Naive thymus-derived CD4-positive, alpha-beta T cell (primary cell): ENCODE measurements at regions of chr5 and their contacts with region 1.

Region 1: DNA sequence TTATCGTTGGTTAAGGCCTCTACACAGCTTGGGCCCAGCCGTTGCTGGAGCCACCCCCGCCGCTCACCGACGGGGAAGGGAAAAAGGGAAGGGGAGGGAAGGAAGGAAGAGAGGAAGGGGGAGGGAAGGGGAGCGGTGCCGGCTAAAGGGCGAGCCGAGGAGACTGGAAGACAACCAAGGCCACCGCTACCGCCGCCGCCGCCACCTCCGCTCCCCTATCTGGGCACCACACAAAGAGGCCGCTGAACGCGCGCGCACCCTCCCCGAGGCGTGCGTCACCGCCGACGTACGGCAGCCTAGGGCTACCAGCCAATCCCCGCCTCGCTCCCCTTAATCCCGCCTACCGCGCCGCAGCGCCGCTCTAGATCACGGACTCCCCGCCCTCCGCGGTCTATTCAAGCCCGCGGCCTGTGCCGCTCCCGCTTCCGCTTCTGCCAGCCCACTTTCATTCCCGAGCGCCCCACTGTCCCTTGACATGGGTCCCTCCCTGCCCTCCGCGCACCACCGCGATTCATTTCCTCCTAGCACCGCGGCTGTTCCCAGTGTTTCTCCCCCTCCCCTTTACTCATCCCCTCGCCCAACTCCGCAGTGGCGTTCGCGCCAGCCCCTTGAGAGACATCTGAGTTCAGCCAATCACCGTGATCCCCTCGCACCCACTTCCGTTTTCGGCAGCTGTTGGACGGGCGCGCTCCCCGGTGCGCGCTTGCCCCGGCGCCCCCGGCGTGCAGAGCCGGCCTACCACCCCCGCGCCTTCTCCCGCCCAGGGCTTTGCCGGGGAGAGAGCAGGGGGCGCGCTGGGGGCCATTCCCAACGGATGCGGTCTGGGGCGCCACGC is at the start of gene HNRNPA0:
- DNase-seq: peak; percentile 94 to 99 (median 98)
- ATAC-seq: peak; percentile 90
- H3K4me3 ChIP-seq: peak within 1 kb of the TSS; percentile 98
- H3K4me3 Mint-ChIP-seq: peak within 1 kb of the TSS; percentile 85 to 100 (median 98)
- H3K27ac ChIP-seq: peak within 1 kb of the TSS; percentile 98
- H3K27ac Mint-ChIP-seq: peak within 1 kb of the TSS; percentile 99 to 100 (median 100)
- H3K4me1 ChIP-seq: peaks cover 17 to 20% of the 10 kb centered on the region in 2 donors
- H3K4me1 Mint-ChIP-seq: peaks cover 21 to 43% (median 31%) of the 10 kb centered on the region in 7 donors
- H3K27me3 ChIP-seq: no peaks in the 10 kb centered on the region
- H3K27me3 Mint-ChIP-seq: peaks cover 0 to 2% (median 0%) of the 10 kb centered on the region in 5 donors
- total RNA-seq, gene HNRNPA0: 30.0 to 40.2 (median 30.7) TPM

Region 2: DNA sequence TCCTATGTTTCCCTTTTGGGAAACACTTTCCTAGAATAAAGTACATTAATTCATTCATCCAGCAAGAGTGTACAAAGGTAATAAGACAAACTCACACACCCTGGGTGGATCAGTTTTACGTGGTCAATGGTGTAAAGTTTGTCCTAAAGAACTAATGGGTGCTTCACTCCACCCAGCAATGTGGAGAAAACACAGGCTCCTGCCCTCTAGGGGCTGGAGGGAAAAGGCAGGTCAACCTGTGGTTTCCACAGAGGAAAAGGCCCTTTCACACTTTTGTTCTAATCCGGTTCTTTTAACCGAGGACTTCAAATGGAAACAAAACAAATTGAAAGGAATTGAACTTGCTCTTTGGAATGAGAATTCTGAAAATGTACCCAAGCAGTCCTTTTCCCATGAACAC is 174.3 kb before region 1 on chr5:
- CTCF ChIA-PET with region 1: no interaction called
- POLR2A ChIA-PET with region 1: no interaction called
- intact Hi-C with region 1: no loop called
- DNase-seq: no peak
- ATAC-seq: no peak
- H3K4me3 ChIP-seq: no peak overlapping the region
- H3K4me3 Mint-ChIP-seq: no peak overlapping the region
- H3K27ac ChIP-seq: no peak overlapping the region
- H3K27ac Mint-ChIP-seq: no peak overlapping the region
- H3K4me1 ChIP-seq: no peaks in the 10 kb centered on the region
- H3K4me1 Mint-ChIP-seq: peaks cover 0 to 5% (median 0%) of the 10 kb centered on the region in 7 donors
- H3K27me3 ChIP-seq: no peaks in the 10 kb centered on the region
- H3K27me3 Mint-ChIP-seq: peaks cover 5 to 22% (median 12%) of the 10 kb centered on the region in 5 donors

Region 3: GRCh38 chr5:137665678-137666460 is 88.5 kb before region 1 on chr5:
- CTCF ChIA-PET with region 1: interaction called, 328 read pairs
- POLR2A ChIA-PET with region 1: interaction called, 19 read pairs
- intact Hi-C with region 1: no loop called
- DNase-seq: peak in 8 of 9 donors; percentile 23 to 66 (median 53)
- ATAC-seq: peak; percentile 99
- H3K4me3 ChIP-seq: no peak overlapping the region
- H3K4me3 Mint-ChIP-seq: peak overlapping the region in 6 of 10 donors; percentile 18 to 56 (median 46)
- H3K27ac ChIP-seq: peak overlapping the region; percentile 30
- H3K27ac Mint-ChIP-seq: peak overlapping the region; percentile 43 to 91 (median 70)
- H3K4me1 ChIP-seq: peaks cover 7 to 9% of the 10 kb centered on the region in 2 donors
- H3K4me1 Mint-ChIP-seq: peaks cover 8 to 35% (median 27%) of the 10 kb centered on the region in 7 donors
- H3K27me3 ChIP-seq: no peaks in the 10 kb centered on the region
- H3K27me3 Mint-ChIP-seq: no peaks in the 10 kb centered on the region

Region 4: GRCh38 chr5:137708796-137709559 is 45.4 kb before region 1 on chr5:
- CTCF ChIA-PET with region 1: no interaction called
- POLR2A ChIA-PET with region 1: no interaction called
- intact Hi-C with region 1: no loop called
- DNase-seq: no peak
- ATAC-seq: no peak
- H3K4me3 ChIP-seq: no peak overlapping the region
- H3K4me3 Mint-ChIP-seq: peak overlapping the region in 1 of 10 donors; percentile 12
- H3K27ac ChIP-seq: no peak overlapping the region
- H3K27ac Mint-ChIP-seq: peak overlapping the region in 2 of 9 donors; percentile 34 to 78
- H3K4me1 ChIP-seq: no peaks in the 10 kb centered on the region
- H3K4me1 Mint-ChIP-seq: peaks cover 0 to 30% (median 19%) of the 10 kb centered on the region in 7 donors
- H3K27me3 ChIP-seq: no peaks in the 10 kb centered on the region
- H3K27me3 Mint-ChIP-seq: no peaks in the 10 kb centered on the region

Region 5: DNA sequence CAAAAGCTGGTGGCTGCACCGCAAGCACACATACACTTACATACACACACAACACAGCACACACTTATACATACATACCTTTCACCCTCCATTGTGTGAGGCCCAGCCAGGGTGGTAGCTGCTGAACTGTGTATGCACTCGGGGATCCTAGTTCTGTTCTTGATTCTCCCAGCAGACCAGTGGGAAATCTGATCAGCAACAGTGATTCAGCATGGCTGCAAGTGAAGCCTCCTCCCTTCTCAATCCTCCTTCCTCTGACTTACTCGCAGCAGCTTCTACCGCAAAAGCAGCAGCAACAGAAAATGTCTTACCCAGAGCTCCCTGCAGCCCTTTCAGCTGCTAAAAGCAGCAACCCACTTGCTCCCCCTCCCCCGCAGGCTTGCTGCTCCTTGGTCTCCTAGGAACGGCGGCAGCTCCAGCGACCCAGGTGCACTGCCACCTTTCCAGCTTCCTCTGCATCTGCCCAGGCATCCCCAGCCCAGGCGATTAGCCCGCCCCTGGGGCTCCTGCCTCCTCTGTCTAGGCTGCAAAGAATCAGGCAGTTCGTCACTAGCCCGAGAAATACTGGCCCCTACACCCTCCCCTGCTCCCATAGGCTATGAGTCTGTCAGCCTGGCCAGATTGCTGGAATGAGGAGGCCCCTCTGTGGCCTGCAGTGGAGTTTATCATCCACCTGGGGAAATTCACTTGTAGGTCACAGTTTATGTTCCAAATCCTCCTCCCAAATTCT is 18.6 kb before region 1 on chr5 and contains the start of gene KLHL3:
- CTCF ChIA-PET with region 1: interaction called, 7 read pairs
- POLR2A ChIA-PET with region 1: interaction called, 121 read pairs
- intact Hi-C with region 1: loop called (anchors 1 kb)
- DNase-seq: peak in 8 of 9 donors; percentile 32 to 57 (median 44)
- ATAC-seq: peak; percentile 49
- H3K4me3 ChIP-seq: peak within 1 kb of the TSS; percentile 86
- H3K4me3 Mint-ChIP-seq: no peak within 1 kb of the TSS
- H3K27ac ChIP-seq: peak within 1 kb of the TSS; percentile 63
- H3K27ac Mint-ChIP-seq: no peak within 1 kb of the TSS
- H3K4me1 ChIP-seq: peaks cover 9 to 58% of the 10 kb centered on the region in 2 donors
- H3K4me1 Mint-ChIP-seq: peaks cover 0 to 42% (median 15%) of the 10 kb centered on the region in 7 donors
- H3K27me3 ChIP-seq: no peaks in the 10 kb centered on the region
- H3K27me3 Mint-ChIP-seq: no peaks in the 10 kb centered on the region
- total RNA-seq, gene KLHL3: 10.4 to 47.3 (median 26.6) TPM

Region 6: DNA sequence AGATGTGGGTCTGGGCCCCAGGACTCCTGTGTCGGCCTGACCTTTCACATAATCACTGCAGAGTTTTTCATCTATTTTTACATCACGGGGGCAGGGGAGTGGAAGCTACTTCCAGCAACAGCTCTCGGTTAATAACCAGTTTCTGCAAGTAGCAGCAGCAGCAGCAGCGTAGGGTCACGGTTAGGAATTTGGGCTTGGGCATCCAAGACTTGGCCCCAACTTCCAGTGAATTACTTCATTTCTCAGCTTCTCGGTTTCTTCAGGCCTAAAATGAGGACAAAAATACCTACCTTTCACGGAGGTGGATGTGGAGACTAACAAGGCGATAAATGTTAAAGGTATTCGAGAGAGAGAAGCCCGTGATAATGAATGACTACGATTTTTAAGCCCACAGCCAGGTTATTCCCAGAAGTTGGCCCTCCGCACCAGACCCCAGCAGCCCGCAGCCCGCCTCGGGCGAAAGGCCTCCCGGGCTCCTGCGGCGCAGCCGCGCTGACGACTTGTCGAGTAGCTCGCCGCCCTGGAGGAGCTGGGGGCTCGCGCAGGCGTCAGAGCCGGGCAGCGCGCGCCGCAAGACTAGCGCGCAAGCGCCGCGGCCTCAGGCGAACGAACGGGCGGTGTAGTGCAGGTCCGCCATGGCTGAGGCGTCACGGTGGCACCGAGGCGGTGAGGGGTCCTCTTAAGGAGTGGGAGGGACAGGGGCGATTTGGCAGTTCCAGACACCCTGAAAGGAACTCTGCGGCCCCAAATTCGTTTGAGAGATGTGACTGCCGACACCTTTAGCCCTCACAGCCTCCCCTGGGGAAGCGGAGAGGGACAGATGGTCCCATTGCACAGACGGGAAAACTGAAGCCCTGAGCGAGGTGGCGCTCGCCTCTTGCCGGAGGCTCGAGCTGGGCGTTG is 134.8 kb after region 1 on chr5 and contains the start of gene PKD2L2:
- CTCF ChIA-PET with region 1: no interaction called
- POLR2A ChIA-PET with region 1: interaction called, 5 read pairs
- intact Hi-C with region 1: loop called (anchors 1 kb)
- DNase-seq: peak; percentile 62 to 82 (median 78)
- ATAC-seq: peak; percentile 99
- H3K4me3 ChIP-seq: peak within 1 kb of the TSS; percentile 73
- H3K4me3 Mint-ChIP-seq: peak within 1 kb of the TSS; percentile 85 to 95 (median 92)
- H3K27ac ChIP-seq: peak within 1 kb of the TSS; percentile 81
- H3K27ac Mint-ChIP-seq: peak within 1 kb of the TSS; percentile 87 to 96 (median 95)
- H3K4me1 ChIP-seq: peaks cover 4 to 12% of the 10 kb centered on the region in 2 donors
- H3K4me1 Mint-ChIP-seq: peaks cover 9 to 37% (median 25%) of the 10 kb centered on the region in 7 donors
- H3K27me3 ChIP-seq: no peaks in the 10 kb centered on the region
- H3K27me3 Mint-ChIP-seq: peaks cover 0 to 4% (median 0%) of the 10 kb centered on the region in 5 donors
- total RNA-seq, gene PKD2L2: 0.46 TPM in 2 of 5 experiments, not detected in the others

Region 7: GRCh38 chr5:138331449-138332368 is 577.4 kb after region 1 on chr5 and contains the start of gene CDC25C:
- CTCF ChIA-PET with region 1: no interaction called
- POLR2A ChIA-PET with region 1: no interaction called
- intact Hi-C with region 1: loop called (anchors 1 kb)
- DNase-seq: peak; percentile 87 to 98 (median 96)
- ATAC-seq: peak; percentile 100
- H3K4me3 ChIP-seq: peak within 1 kb of the TSS; percentile 85
- H3K4me3 Mint-ChIP-seq: peak within 1 kb of the TSS; percentile 83 to 95 (median 86)
- H3K27ac ChIP-seq: peak within 1 kb of the TSS; percentile 49
- H3K27ac Mint-ChIP-seq: peak within 1 kb of the TSS; percentile 48 to 92 (median 68)
- H3K4me1 ChIP-seq: peaks cover 1 to 7% of the 10 kb centered on the region in 2 donors
- H3K4me1 Mint-ChIP-seq: peaks cover 7 to 35% (median 14%) of the 10 kb centered on the region in 7 donors
- H3K27me3 ChIP-seq: no peaks in the 10 kb centered on the region
- H3K27me3 Mint-ChIP-seq: no peaks in the 10 kb centered on the region
- total RNA-seq, gene CDC25C: 9.8 TPM in 1 of 5 experiments, not detected in the others

Region 8: DNA sequence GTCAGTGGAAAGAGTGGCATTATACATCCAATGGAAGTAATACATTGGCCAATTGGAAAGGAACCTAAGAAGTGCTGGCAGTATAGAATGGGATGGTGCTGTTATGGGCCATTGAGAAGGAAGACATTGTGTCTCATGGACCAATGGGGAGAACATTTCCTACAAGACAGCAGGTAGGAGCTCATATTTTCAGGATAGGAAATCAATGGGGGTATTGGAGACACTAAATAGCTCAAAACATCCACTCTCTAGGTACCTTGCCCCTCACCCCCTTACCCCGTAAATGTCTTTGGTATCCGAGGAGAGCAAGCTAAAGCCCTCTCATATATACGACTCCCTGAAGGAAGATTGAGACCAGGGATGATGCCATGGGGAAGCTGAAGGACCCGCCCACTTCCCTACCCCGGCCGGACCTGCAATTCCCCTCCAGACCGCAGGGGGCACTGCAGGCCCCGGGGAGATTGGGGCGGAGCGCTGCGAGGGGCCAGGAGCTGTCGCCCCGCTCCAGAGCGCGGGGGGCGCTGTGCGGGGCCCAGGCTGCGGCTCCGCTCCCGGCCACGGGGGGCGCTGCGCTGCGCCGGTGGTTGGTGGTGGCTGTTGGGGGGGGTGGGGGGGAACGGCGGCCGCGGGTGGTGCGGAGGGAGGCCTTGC is 597.9 kb after region 1 on chr5 and contains the start of gene KDM3B:
- CTCF ChIA-PET with region 1: no interaction called
- POLR2A ChIA-PET with region 1: interaction called, 3 read pairs
- intact Hi-C with region 1: loop called in 1 of 2 experiments (anchors 5 kb)
- DNase-seq: peak; percentile 82 to 100 (median 96)
- ATAC-seq: peak; percentile 96
- H3K4me3 ChIP-seq: peak within 1 kb of the TSS; percentile 93
- H3K4me3 Mint-ChIP-seq: peak within 1 kb of the TSS; percentile 88 to 98 (median 96)
- H3K27ac ChIP-seq: peak within 1 kb of the TSS; percentile 91
- H3K27ac Mint-ChIP-seq: peak within 1 kb of the TSS; percentile 90 to 98 (median 96)
- H3K4me1 ChIP-seq: peaks cover 18 to 32% of the 10 kb centered on the region in 2 donors
- H3K4me1 Mint-ChIP-seq: peaks cover 30 to 54% (median 48%) of the 10 kb centered on the region in 7 donors
- H3K27me3 ChIP-seq: no peaks in the 10 kb centered on the region
- H3K27me3 Mint-ChIP-seq: no peaks in the 10 kb centered on the region
- total RNA-seq, gene KDM3B: 67.7 to 90.2 (median 82.8) TPM

Region 9: DNA sequence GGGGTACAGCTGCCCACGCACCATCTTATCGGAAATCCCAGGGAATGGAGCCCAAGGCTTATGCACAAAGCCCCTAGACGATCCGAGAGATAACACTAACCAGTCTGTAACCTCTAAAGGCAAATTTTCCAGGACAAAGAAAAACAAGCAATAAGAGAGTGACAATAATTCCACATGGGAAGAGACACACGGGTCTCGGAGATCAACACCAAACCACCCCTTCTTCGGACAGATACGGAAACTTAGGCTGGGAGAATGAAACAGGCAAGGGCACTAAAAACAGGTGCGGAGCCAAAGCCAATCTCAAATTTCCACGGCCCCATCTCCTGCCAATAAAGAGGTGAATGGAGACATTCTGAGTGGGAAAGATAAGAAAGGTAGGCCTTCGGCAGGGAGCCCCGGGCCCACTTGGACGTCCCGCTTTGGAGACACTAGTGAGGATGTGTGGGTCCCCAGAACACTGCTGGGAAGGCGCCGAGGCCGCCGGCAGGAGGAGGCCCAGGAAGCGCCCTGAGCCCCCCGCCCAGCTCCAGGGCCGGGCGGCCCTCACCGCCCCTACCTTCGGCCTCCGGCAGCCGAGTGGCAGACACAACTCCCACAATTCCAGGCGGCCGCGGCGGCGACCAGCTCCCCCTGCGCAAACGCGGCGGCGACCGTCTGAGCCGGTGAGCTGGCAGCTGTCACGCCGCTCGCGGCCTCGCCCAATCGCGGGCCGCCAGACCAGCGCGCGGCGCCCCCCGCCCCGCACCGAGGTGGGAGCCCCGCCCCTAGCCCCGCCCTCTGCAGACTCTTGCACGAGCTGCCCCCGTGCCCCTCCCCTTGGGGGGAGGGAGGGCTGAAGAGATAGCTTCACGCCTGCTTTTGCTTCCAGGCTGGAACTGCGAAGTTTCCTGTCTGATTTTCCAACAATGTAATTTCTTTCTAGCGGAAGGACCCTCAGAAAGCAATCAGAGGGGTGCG is 1443.6 kb after region 1 on chr5 and contains the start of gene SIL1:
- CTCF ChIA-PET with region 1: no interaction called
- POLR2A ChIA-PET with region 1: no interaction called
- intact Hi-C with region 1: loop called in 1 of 2 experiments (anchors 10 kb)
- DNase-seq: peak; percentile 88 to 94 (median 91)
- ATAC-seq: peak; percentile 99
- H3K4me3 ChIP-seq: peak within 1 kb of the TSS; percentile 97
- H3K4me3 Mint-ChIP-seq: peak within 1 kb of the TSS; percentile 83 to 96 (median 90)
- H3K27ac ChIP-seq: peak within 1 kb of the TSS; percentile 89
- H3K27ac Mint-ChIP-seq: peak within 1 kb of the TSS; percentile 86 to 96 (median 91)
- H3K4me1 ChIP-seq: peaks cover 8% of the 10 kb centered on the region in 2 donors
- H3K4me1 Mint-ChIP-seq: peaks cover 17 to 38% (median 26%) of the 10 kb centered on the region in 7 donors
- H3K27me3 ChIP-seq: no peaks in the 10 kb centered on the region
- H3K27me3 Mint-ChIP-seq: no peaks in the 10 kb centered on the region
- total RNA-seq, gene SIL1: 11.9 to 27.1 (median 22.8) TPM